CD4-positive, alpha-beta T cell (primary cell): ENCODE measurements at regions of chrX and their contacts with region 1.

Region 1: GRCh38 chrX:20128670-20129069 is 12.0 kb upstream of the MAP7D2 start:
- DNase-seq: no peak
- ATAC-seq: no peak
- H3K4me3 ChIP-seq: no peak overlapping the region
- H3K4me3 Mint-ChIP-seq: no peak overlapping the region
- H3K27ac ChIP-seq: no peak overlapping the region
- H3K27ac Mint-ChIP-seq: no peak overlapping the region
- H3K4me1 ChIP-seq: no peaks in the 10 kb centered on the region
- H3K4me1 Mint-ChIP-seq: peaks cover 4% of the 10 kb centered on the region
- H3K27me3 ChIP-seq: no peaks in the 10 kb centered on the region
- H3K27me3 Mint-ChIP-seq: no peaks in the 10 kb centered on the region
- CTCF ChIP-seq: no peak

Region 2: GRCh38 chrX:19544693-19545305 is 583.9 kb before region 1 on chrX:
- CTCF ChIA-PET with region 1: no interaction called
- POLR2A ChIA-PET with region 1: no interaction called
- intact Hi-C with region 1: loop called in 1 of 2 experiments (anchors 10 kb)
- DNase-seq: peak in 9 of 14 experiments; percentile 5 to 64 (median 23)
- ATAC-seq: peak; percentile 60
- H3K4me3 ChIP-seq: no peak overlapping the region
- H3K4me3 Mint-ChIP-seq: no peak overlapping the region
- H3K27ac ChIP-seq: no peak overlapping the region
- H3K27ac Mint-ChIP-seq: peak overlapping the region; percentile 40
- H3K4me1 ChIP-seq: no peaks in the 10 kb centered on the region
- H3K4me1 Mint-ChIP-seq: no peaks in the 10 kb centered on the region
- H3K27me3 ChIP-seq: no peaks in the 10 kb centered on the region
- H3K27me3 Mint-ChIP-seq: no peaks in the 10 kb centered on the region
- CTCF ChIP-seq: peak; percentile 60

Region 3: GRCh38 chrX:19904778-19905367 is 223.8 kb before region 1 on chrX:
- CTCF ChIA-PET with region 1: no interaction called
- POLR2A ChIA-PET with region 1: no interaction called
- intact Hi-C with region 1: loop called (anchors 5 to 10 kb)
- DNase-seq: peak in 4 of 14 experiments; percentile 35 to 69 (median 62)
- ATAC-seq: peak; percentile 73
- H3K4me3 ChIP-seq: no peak overlapping the region
- H3K4me3 Mint-ChIP-seq: no peak overlapping the region
- H3K27ac ChIP-seq: no peak overlapping the region
- H3K27ac Mint-ChIP-seq: no peak overlapping the region
- H3K4me1 ChIP-seq: no peaks in the 10 kb centered on the region
- H3K4me1 Mint-ChIP-seq: peaks cover 11% of the 10 kb centered on the region
- H3K27me3 ChIP-seq: no peaks in the 10 kb centered on the region
- H3K27me3 Mint-ChIP-seq: no peaks in the 10 kb centered on the region
- CTCF ChIP-seq: peak; percentile 66